Mammary epithelial cell (primary cell): ENCODE measurements at regions of chr3 and their contacts with region 1.

Region 1: GRCh38 chr3:185225523-185225922 is 28.3 kb downstream of the EHHADH start:
- DNase-seq: peak; percentile 31
- H3K4me3 ChIP-seq: no peak overlapping the region
- H3K27ac ChIP-seq: no peak overlapping the region
- H3K4me1 ChIP-seq: peaks cover 2% of the 10 kb centered on the region
- H3K27me3 ChIP-seq: no peaks in the 10 kb centered on the region
- CTCF ChIP-seq: no peak

Region 2: DNA sequence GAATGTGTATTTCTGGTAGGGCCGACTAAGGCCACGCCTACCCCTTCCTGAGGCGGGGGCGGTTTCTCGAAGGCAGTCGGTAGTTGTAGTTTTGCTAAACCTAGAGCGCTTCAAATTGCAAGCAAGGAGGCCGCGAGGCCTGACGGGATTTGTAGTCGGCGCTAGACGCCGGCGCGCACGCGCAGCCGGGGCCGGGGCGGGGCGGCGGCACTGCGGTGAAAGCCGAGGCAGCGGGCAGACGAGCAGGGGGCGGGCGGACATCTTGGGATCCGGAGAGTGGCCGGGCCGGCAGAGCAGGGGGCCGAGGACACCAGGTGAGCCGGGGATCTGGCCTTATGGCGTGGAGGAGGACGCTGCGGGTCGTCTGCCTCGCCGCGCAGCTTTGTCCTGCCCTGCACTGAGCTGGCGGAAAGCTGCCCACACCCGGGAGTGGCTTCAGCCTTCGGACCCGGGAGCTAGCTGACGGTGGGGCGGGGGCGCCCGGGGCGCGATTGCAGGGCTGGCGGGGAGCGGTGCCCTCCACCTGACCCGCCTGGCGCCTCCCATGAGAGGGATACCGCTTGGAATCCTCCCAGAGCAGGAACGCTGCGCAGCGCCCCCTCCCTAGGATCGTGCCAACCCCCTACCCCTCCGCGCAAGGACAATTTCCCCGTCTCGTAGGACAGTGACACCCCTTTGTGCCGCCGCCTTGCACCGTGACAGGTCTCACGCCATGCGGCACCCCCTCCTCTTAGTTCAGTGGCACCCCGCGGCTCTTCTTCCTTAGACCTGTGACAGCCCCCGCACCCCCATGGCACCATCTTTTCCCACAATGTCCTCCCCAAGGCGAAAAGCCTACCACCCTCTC is 1050.7 kb before region 1 on chr3 and contains the start of gene AP2M1:
- CTCF ChIA-PET with region 1: no interaction called
- dilution Hi-C with region 1: no loop called
- in situ Hi-C with region 1: no loop called
- intact Hi-C with region 1: no loop called
- DNase-seq: peak; percentile 98
- H3K4me3 ChIP-seq: peak within 1 kb of the TSS; percentile 78 to 99 (median 82)
- H3K27ac ChIP-seq: peak within 1 kb of the TSS; percentile 53
- H3K4me1 ChIP-seq: peaks cover 29% of the 10 kb centered on the region
- H3K27me3 ChIP-seq: no peaks in the 10 kb centered on the region
- CTCF ChIP-seq: peak in 1 of 2 donors; percentile 10
- total RNA-seq, gene AP2M1: 291 to 348 TPM

Region 3: GRCh38 chr3:184428561-184429175 is 796.9 kb before region 1 on chr3:
- CTCF ChIA-PET with region 1: interaction called, 11 read pairs
- dilution Hi-C with region 1: no loop called
- in situ Hi-C with region 1: no loop called
- intact Hi-C with region 1: no loop called
- DNase-seq: no peak
- H3K4me3 ChIP-seq: no peak overlapping the region
- H3K27ac ChIP-seq: no peak overlapping the region
- H3K4me1 ChIP-seq: peaks cover 5% of the 10 kb centered on the region
- H3K27me3 ChIP-seq: peaks cover 3% of the 10 kb centered on the region
- CTCF ChIP-seq: no peak

Region 4: DNA sequence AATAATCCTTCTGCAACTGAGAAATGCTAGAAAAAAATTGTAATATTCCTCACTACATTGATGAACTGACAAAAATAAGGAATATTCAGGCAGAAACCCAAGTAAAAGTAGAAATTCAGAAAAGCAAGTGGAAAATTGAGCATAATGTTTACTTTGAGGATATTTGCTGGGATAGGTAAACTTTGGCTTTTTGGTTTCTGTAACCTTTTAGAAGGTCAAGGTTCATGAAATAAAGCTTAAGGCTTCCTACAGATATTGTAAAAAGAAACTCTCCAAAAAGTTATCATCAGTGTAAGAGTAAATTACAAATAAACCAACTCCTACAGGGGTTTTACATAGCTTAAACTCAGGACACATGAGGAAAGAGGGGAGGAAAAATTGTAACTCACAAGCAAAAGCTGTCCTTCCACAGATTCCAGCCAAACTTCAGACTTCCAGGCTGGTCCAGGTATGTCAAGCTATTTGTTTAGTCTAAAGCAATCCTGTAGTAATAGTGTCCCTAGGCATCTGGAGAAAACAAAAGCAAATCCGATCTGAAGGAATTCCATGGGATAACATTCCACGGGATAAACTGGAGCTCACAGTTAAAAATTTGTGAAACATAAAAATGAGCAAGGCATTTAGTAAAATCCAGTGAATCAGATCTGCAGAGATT is 93.8 kb before region 1 on chr3:
- CTCF ChIA-PET with region 1: no interaction called
- dilution Hi-C with region 1: no loop called
- in situ Hi-C with region 1: no loop called
- intact Hi-C with region 1: no loop called
- DNase-seq: no peak
- H3K4me3 ChIP-seq: no peak overlapping the region
- H3K27ac ChIP-seq: no peak overlapping the region
- H3K4me1 ChIP-seq: no peaks in the 10 kb centered on the region
- H3K27me3 ChIP-seq: peaks cover 3% of the 10 kb centered on the region
- CTCF ChIP-seq: no peak

Region 5: GRCh38 chr3:185145511-185145910 is 80.0 kb before region 1 on chr3:
- CTCF ChIA-PET with region 1: no interaction called
- dilution Hi-C with region 1: no loop called
- in situ Hi-C with region 1: no loop called
- intact Hi-C with region 1: no loop called
- DNase-seq: no peak
- H3K4me3 ChIP-seq: no peak overlapping the region
- H3K27ac ChIP-seq: no peak overlapping the region
- H3K4me1 ChIP-seq: no peaks in the 10 kb centered on the region
- H3K27me3 ChIP-seq: peaks cover 20% of the 10 kb centered on the region
- CTCF ChIP-seq: no peak